H1 (cell line): ENCODE measurements at regions of chr19 and their contacts with region 1.

Region 1: DNA sequence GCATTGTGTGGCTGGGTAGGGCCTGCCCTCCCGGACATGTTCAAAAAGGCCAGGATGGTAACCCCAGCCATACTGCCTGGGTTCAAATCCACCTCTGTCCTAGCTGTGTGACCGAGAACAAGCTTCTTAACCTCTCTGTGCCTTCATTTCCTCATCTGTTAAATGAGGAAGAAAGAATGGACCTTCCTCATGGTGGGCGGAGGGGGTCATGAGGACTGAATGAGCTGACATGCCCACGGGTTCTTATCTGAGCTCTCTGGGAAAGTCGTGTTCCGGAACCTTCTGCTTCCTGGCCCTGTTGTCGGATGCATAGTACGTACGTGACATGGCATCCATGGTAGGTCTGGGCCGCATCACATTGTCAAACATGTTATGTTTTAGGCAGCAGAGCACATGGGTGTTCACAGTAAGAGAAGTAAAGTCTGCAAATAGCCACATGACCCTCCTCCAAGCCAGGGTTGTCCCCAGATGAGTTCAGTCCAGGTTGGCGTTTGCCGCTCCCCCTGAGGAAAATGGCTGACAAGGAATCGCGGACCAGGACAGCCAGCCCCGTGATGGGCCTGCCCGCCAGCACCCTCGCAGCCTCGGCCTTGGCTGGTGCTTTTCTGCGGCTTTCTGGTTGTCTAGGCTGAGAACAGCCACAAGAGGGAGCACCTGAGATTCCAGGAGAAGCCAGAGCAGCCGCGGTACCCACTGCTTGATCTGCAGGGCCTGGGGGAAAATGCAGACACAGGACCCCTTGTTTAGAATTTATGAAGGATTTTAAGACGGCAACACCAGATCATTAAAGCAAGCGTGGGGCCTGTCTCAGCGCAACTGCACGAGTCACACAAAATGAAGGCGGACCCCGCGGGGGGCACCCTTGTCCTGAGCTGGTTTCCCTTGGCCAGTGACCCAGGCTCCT is 2.4 kb upstream of the NTN5 start:
- DNase-seq: peak in 1 of 2 experiments; percentile 90
- H3K4me3 ChIP-seq: peak overlapping the region in 1 of 4 experiments; percentile 15; a peak in 1 of 8 replicates
- H3K27ac ChIP-seq: no peak overlapping the region
- H3K4me1 ChIP-seq: peaks cover 2 to 23% (median 19%) of the 10 kb centered on the region in 4 experiments
- H3K27me3 ChIP-seq: peaks cover 0 to 5% (median 3%) of the 10 kb centered on the region in 4 experiments; a peak in 2 of 7 replicates
- CTCF ChIP-seq: peak; percentile 68 to 95 (median 84)
- EP300 ChIP-seq: no peak
- POLR2A ChIP-seq: no peak
- RAD21 ChIP-seq: peak; percentile 75 to 84

Region 2: DNA sequence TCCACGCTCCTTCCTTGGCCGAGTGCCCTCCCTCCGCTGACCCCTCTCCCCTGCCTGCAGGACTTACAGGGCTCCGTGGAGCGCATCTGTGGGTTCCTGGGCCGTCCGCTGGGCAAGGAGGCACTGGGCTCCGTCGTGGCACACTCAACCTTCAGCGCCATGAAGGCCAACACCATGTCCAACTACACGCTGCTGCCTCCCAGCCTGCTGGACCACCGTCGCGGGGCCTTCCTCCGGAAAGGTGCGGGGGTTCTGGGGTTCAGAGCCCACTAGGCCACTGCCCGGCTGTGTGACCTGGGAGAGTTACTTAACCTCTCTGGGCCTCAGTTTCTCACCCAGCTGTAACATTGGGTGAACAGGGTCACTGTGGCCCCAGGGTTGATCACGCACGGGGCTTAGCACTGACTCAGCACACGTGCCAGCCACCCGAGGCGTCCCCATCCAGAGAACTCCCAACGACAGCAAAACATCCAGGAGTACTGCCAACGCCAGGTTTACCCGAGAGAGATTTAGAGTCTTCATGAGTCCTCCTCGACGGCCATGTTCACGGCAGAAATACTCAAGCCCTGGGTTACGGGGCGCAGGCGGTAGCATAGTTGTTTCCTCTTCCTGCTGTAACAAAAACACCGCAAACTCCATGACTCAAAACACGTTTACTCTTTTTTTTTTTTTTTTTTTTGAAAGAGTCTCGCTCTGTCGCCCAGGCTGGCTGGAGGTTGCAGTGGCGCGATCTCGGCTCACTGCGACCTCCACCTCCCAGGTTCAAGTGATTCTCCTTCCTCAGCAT is 78.3 kb before region 1 on chr19:
- CTCF ChIA-PET with region 1: no interaction called
- POLR2A ChIA-PET with region 1: no interaction called
- DNase-seq: no peak
- H3K4me3 ChIP-seq: no peak overlapping the region
- H3K27ac ChIP-seq: no peak overlapping the region
- H3K4me1 ChIP-seq: no peaks in the 10 kb centered on the region
- H3K27me3 ChIP-seq: 0 out of 7 replicates have a peak, but pooled peaks cover 0 to 2% (median 0%) of the 10 kb centered on the region in 4 experiments
- CTCF ChIP-seq: no peak
- EP300 ChIP-seq: no peak
- POLR2A ChIP-seq: no peak
- RAD21 ChIP-seq: no peak

Region 3: GRCh38 chr19:48664450-48664849 is 10.7 kb before region 1 on chr19:
- CTCF ChIA-PET with region 1: interaction called, 32 read pairs
- POLR2A ChIA-PET with region 1: interaction called, 4 read pairs
- DNase-seq: no peak
- H3K4me3 ChIP-seq: no peak overlapping the region
- H3K27ac ChIP-seq: no peak overlapping the region
- H3K4me1 ChIP-seq: 0 out of 7 replicates have a peak, but pooled peaks cover 0 to 3% (median 0%) of the 10 kb centered on the region in 4 experiments
- H3K27me3 ChIP-seq: no peaks in the 10 kb centered on the region; a peak in 1 of 7 replicates
- CTCF ChIP-seq: no peak
- EP300 ChIP-seq: no peak
- POLR2A ChIP-seq: no peak
- RAD21 ChIP-seq: no peak

Region 4: GRCh38 chr19:48705431-48705830 is 30.3 kb after region 1 on chr19:
- CTCF ChIA-PET with region 1: interaction called, 53 read pairs
- POLR2A ChIA-PET with region 1: no interaction called
- DNase-seq: no peak
- H3K4me3 ChIP-seq: no peak overlapping the region
- H3K27ac ChIP-seq: no peak overlapping the region
- H3K4me1 ChIP-seq: peaks cover 0 to 3% (median 0%) of the 10 kb centered on the region in 4 experiments; a peak in 1 of 7 replicates
- H3K27me3 ChIP-seq: no peaks in the 10 kb centered on the region
- CTCF ChIP-seq: no peak
- EP300 ChIP-seq: no peak
- POLR2A ChIP-seq: no peak
- RAD21 ChIP-seq: no peak

Region 5: GRCh38 chr19:48724796-48725753 is 49.9 kb after region 1 on chr19:
- CTCF ChIA-PET with region 1: interaction called, 33 read pairs
- POLR2A ChIA-PET with region 1: interaction called, 5 read pairs
- DNase-seq: no peak
- H3K4me3 ChIP-seq: no peak overlapping the region
- H3K27ac ChIP-seq: no peak overlapping the region
- H3K4me1 ChIP-seq: peaks cover 0 to 11% (median under 1%) of the 10 kb centered on the region in 4 experiments; a peak in 4 of 7 replicates
- H3K27me3 ChIP-seq: no peaks in the 10 kb centered on the region
- CTCF ChIP-seq: no peak
- EP300 ChIP-seq: no peak
- POLR2A ChIP-seq: no peak
- RAD21 ChIP-seq: no peak

Region 6: GRCh38 chr19:48795055-48795684 is 120.0 kb after region 1 on chr19:
- CTCF ChIA-PET with region 1: interaction called, 20 read pairs
- POLR2A ChIA-PET with region 1: no interaction called
- DNase-seq: peak; percentile 82 to 92
- H3K4me3 ChIP-seq: peak overlapping the region; percentile 39 to 84 (median 70)
- H3K27ac ChIP-seq: peak overlapping the region; percentile 65; the same call in 1 of the 2 replicates
- H3K4me1 ChIP-seq: peaks cover 0 to 16% (median 10%) of the 10 kb centered on the region in 4 experiments; a peak in 6 of 7 replicates
- H3K27me3 ChIP-seq: no peaks in the 10 kb centered on the region
- CTCF ChIP-seq: peak; percentile 84 to 90 (median 87)
- EP300 ChIP-seq: no peak
- POLR2A ChIP-seq: no peak
- RAD21 ChIP-seq: peak; percentile 75 to 79